ENCODE measurements at regions of chr1 and their contacts with region 1.

Region 1: GRCh38 chr1:32335790-32336590 is at the start of gene MARCKSL1:
- DNase-seq: peak; percentile 85
- H3K4me3 ChIP-seq: peak within 1 kb of the TSS; percentile 85
- H3K27ac ChIP-seq: peak within 1 kb of the TSS; percentile 64
- H3K4me1 ChIP-seq: peaks cover 50% of the 10 kb centered on the region
- CTCF ChIP-seq: no peak
- total RNA-seq, gene MARCKSL1: 120 and 130 TPM in 2 replicates

Region 2: GRCh38 chr1:30506291-30507015 is 1829.5 kb before region 1 on chr1:
- CTCF ChIA-PET with region 1: no interaction called
- POLR2A ChIA-PET with region 1: no interaction called
- intact Hi-C with region 1: no loop called
- DNase-seq: no peak
- H3K4me3 ChIP-seq: no peak overlapping the region
- H3K27ac ChIP-seq: no peak overlapping the region
- H3K4me1 ChIP-seq: no peaks in the 10 kb centered on the region
- CTCF ChIP-seq: no peak

Region 3: GRCh38 chr1:32082022-32082421 is 254.0 kb before region 1 on chr1:
- CTCF ChIA-PET with region 1: no interaction called
- POLR2A ChIA-PET with region 1: no interaction called
- intact Hi-C with region 1: no loop called
- DNase-seq: no peak
- H3K4me3 ChIP-seq: no peak overlapping the region
- H3K27ac ChIP-seq: no peak overlapping the region
- H3K4me1 ChIP-seq: peaks cover 7% of the 10 kb centered on the region
- CTCF ChIP-seq: no peak

Region 4: DNA sequence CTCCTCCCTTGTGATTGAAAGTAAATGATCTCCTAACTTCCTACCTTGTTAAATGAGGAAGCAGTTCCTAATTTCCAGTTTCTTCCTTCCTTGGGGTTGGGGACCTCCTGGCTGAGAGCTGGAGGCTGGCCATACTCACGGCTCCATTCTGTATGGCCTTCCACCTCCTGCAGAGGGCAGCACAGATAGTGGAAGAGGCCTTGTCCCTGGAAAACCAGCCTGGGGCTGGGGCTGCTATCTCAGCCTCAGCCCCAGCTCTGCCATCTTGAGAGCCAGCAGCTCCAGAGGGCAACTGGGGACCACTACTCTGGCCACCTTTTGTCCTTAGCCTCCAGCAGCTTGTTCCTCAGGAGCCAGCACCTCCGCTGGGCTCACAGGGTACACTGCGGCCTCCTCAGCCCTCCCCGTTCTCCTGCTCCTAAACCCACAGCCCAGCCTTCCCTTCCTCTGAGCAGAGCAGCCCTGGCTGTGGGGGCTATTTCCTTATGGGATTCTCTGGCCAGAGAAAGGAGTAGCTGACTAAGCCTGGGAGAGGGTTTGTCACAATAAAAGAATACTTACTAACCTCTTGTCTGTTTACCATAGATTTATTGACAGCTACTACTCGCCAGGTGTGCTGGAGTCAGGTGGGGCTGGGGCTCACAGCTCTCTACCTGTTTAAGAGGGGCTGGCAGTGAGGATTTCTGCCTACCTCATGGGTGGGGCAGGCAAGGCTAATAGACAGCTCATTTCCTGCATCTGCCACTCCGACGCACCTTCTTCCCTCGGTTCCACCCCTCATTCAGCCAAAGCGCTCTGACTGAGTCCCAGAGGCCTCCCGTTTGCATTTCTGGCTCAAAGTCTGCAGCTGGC is 120.1 kb before region 1 on chr1:
- CTCF ChIA-PET with region 1: no interaction called
- POLR2A ChIA-PET with region 1: no interaction called
- intact Hi-C with region 1: loop called (anchors 1 kb)
- DNase-seq: peak; percentile 81
- H3K4me3 ChIP-seq: no peak overlapping the region
- H3K27ac ChIP-seq: no peak overlapping the region
- H3K4me1 ChIP-seq: peaks cover 11% of the 10 kb centered on the region
- CTCF ChIP-seq: peak; percentile 95

Region 5: GRCh38 chr1:32321712-32322291 is 14.2 kb before region 1 on chr1:
- CTCF ChIA-PET with region 1: interaction called, 3 read pairs
- POLR2A ChIA-PET with region 1: interaction called, 23 read pairs
- intact Hi-C with region 1: no loop called
- DNase-seq: peak; percentile 29
- H3K4me3 ChIP-seq: peak overlapping the region; percentile 30
- H3K27ac ChIP-seq: peak overlapping the region; percentile 74
- H3K4me1 ChIP-seq: peaks cover 76% of the 10 kb centered on the region
- CTCF ChIP-seq: no peak

Region 6: DNA sequence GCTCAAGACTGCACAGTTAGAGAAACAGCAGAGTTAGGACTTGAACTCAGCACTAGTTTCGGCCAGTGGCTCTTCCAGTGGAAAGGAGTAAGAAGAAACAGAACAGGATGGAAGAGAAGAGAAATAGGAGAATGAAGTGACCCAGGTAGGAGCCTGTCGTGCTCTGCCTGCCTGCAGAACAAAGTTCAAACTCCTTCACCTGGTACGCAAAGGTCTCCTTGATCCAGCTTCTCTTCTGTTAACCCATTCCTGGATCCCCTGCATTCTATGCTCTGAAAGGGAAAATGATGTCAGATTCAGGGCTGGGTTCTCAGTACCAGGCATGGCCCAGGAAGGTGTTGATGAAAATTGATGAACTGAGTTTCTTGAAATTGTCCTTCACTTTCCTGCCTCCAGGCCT is 22.4 kb after region 1 on chr1:
- CTCF ChIA-PET with region 1: interaction called, 12 read pairs
- POLR2A ChIA-PET with region 1: no interaction called
- intact Hi-C with region 1: no loop called
- DNase-seq: no peak
- H3K4me3 ChIP-seq: no peak overlapping the region
- H3K27ac ChIP-seq: no peak overlapping the region
- H3K4me1 ChIP-seq: peaks cover 21% of the 10 kb centered on the region
- CTCF ChIP-seq: no peak

Region 7: GRCh38 chr1:32817159-32817814 is 481.3 kb after region 1 on chr1 and contains the starts of genes S100PBP and YARS1:
- CTCF ChIA-PET with region 1: no interaction called
- POLR2A ChIA-PET with region 1: interaction called, 3 read pairs
- intact Hi-C with region 1: loop called (anchors 5 kb)
- DNase-seq: peak; percentile 99
- H3K4me3 ChIP-seq: peak within 1 kb of the TSS; percentile 100
- H3K27ac ChIP-seq: peak within 1 kb of the TSS; percentile 99
- H3K4me1 ChIP-seq: peaks cover 62% of the 10 kb centered on the region
- CTCF ChIP-seq: no peak
- total RNA-seq, gene S100PBP: 72.1 and 91.8 TPM in 2 replicates
- total RNA-seq, gene YARS1: 276 and 282 TPM in 2 replicates

Measured in OCI-LY7 (cell line).